KBM-7 (cell line): ENCODE measurements at regions of chr3 and their contacts with region 1.

Region 1: DNA sequence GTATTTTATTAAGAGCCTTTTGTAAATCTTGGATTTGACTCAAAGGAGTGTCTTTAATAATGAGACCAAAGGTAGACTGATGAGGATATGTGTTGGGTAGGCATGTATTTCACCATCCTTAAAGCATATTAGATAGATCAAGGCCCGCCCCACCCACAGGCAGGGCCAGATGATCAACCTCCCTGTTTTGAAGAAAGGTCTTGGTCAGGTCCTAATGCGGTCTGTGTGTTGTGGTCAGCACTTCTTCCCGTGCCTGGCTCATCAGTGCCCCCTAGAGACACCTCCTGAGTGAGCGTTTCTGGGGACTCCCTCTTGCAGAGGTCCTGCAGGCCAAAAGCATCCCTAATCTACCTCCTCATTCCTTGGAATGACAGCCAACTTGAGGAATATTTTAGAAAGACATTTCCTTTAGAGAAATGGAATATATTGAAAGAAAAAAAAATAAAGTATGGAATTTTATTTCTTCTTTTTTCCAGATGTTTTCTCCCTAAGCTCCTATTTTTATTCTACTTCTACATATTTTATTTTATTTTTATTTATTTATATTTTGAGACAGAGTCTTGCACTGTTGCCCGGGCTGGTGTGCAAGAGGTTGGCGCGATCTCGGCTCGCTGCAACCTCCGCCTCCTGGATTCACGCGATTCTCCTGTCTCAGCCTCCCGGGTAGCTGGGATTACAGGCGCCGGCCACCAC is 6.0 kb downstream of the TM4SF4 start:
- DNase-seq: peak; percentile 75

Region 2: GRCh38 chr3:148955544-148956346 is 524.7 kb before region 1 on chr3:
- in situ Hi-C with region 1: loop called (anchors 25 kb)
- DNase-seq: peak; percentile 72

Region 3: GRCh38 chr3:149393345-149394160 is 86.9 kb before region 1 on chr3:
- in situ Hi-C with region 1: loop called (anchors 10 kb)
- DNase-seq: peak; percentile 57